CD4-positive, alpha-beta memory T cell (primary cell): ENCODE measurements at regions of chr14 and their contacts with region 1.

Region 1: DNA sequence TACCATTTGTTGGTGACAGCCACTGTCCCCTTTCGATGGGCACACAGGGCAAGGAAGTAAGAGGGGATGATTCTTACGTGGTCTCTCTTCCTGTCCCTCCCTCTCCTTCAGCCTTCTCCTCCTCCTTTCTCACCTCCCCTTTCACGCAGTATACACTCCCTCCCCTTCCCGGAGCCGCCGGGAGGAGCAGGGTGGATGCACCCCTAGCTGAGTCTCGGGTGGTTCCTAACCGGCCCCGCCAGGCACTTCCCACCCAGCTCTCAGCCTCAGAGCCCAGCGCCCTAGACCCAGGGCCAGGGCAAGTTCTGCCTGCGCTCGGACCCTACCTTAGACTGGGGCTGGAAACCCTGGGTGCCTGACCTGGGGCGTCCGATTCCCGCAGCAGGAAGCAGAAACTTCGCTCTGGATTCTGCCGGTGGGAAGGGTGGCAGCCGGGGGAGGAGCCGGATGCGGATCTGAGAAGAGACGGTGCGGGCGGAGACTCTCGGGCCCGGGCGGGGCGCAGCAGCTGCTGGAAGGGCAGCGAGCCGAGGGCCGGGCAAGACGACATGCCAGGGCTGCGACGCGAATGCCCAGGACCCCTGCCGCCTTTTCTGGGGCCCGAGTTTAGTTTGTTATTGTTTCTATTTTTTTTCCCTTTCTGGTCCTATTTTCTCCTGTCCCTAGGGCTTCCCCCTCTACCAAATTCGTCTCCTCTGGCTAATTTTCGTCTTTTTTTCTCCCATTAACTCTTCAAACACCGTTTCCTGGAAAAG is at the start of gene TEP1:
- DNase-seq: peak; percentile 56 to 75 (median 65)
- H3K4me3 ChIP-seq: peak within 1 kb of the TSS; percentile 73 to 79
- H3K4me3 Mint-ChIP-seq: peak within 1 kb of the TSS; percentile 92 to 100 (median 99)
- H3K27ac ChIP-seq: peak within 1 kb of the TSS; percentile 85
- H3K27ac Mint-ChIP-seq: peak within 1 kb of the TSS; percentile 91 to 99 (median 96)
- H3K4me1 ChIP-seq: peaks cover 38% of the 10 kb centered on the region
- H3K4me1 Mint-ChIP-seq: peaks cover 32 to 52% (median 41%) of the 10 kb centered on the region in 4 donors
- H3K27me3 ChIP-seq: no peaks in the 10 kb centered on the region
- H3K27me3 Mint-ChIP-seq: no peaks in the 10 kb centered on the region
- total RNA-seq, gene TEP1: 66.7 to 67.3 TPM

Region 2: GRCh38 chr14:20343092-20343861 is 69.9 kb before region 1 on chr14 and contains the start of gene PARP2:
- CTCF ChIA-PET with region 1: interaction called, 28 read pairs
- POLR2A ChIA-PET with region 1: interaction called, 34 read pairs
- intact Hi-C with region 1: loop called (anchors 1 kb)
- DNase-seq: peak; percentile 93 to 96 (median 93)
- H3K4me3 ChIP-seq: peak within 1 kb of the TSS; percentile 67 to 71
- H3K4me3 Mint-ChIP-seq: peak within 1 kb of the TSS; percentile 92 to 99 (median 98)
- H3K27ac ChIP-seq: peak within 1 kb of the TSS; percentile 94
- H3K27ac Mint-ChIP-seq: peak within 1 kb of the TSS; percentile 97 to 100 (median 98)
- H3K4me1 ChIP-seq: peaks cover 7% of the 10 kb centered on the region
- H3K4me1 Mint-ChIP-seq: peaks cover 5 to 27% (median 10%) of the 10 kb centered on the region in 4 donors
- H3K27me3 ChIP-seq: no peaks in the 10 kb centered on the region
- H3K27me3 Mint-ChIP-seq: no peaks in the 10 kb centered on the region
- total RNA-seq, gene PARP2: 20.3 to 25.0 TPM

Region 3: DNA sequence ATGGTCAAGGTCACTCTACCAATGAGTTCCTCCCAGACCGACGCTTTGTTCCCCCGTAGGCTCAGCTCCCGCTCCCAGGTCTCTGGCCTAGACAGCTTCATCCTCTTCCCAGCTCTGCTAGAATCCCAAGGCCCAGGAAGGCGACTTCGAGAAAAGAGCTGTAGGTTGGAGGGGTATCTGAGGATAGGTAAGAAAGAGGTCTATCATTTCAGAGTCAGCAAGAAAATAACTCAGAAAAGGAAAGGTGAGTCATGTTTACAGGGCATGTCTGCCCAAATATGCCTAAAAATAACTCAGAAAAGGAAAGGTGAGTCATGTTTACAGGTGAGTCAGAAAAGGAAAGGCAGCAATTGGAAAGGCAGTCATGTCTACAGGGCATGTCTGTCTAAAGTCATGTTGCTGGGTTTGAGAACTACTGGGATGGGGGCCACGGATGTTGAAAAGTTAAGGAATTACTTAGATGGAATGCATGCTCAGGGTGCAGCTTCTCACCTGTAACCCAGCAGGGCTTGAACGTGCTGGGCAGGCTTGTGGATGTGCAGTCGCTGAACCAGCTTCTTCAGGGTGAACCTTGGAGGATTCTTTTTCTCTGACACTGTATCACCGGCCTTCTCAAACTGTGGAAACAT is 12.1 kb before region 1 on chr14:
- CTCF ChIA-PET with region 1: interaction called, 48 read pairs
- POLR2A ChIA-PET with region 1: interaction called, 5 read pairs
- intact Hi-C with region 1: no loop called
- DNase-seq: no peak
- H3K4me3 ChIP-seq: no peak overlapping the region
- H3K4me3 Mint-ChIP-seq: peak overlapping the region in 1 of 8 donors; percentile 5
- H3K27ac ChIP-seq: no peak overlapping the region
- H3K27ac Mint-ChIP-seq: peak overlapping the region in 5 of 7 donors; percentile 1 to 81 (median 77)
- H3K4me1 ChIP-seq: no peaks in the 10 kb centered on the region
- H3K4me1 Mint-ChIP-seq: peaks cover 15 to 26% (median 22%) of the 10 kb centered on the region in 4 donors
- H3K27me3 ChIP-seq: no peaks in the 10 kb centered on the region
- H3K27me3 Mint-ChIP-seq: no peaks in the 10 kb centered on the region

Region 4: GRCh38 chr14:20440882-20441281 is 27.7 kb after region 1 on chr14:
- CTCF ChIA-PET with region 1: interaction called, 14 read pairs
- POLR2A ChIA-PET with region 1: no interaction called
- intact Hi-C with region 1: no loop called
- DNase-seq: peak in 3 of 5 donors; percentile 12 to 36 (median 22)
- H3K4me3 ChIP-seq: no peak overlapping the region
- H3K4me3 Mint-ChIP-seq: peak overlapping the region in 4 of 8 donors; percentile 14 to 68 (median 35)
- H3K27ac ChIP-seq: no peak overlapping the region
- H3K27ac Mint-ChIP-seq: peak overlapping the region; percentile 53 to 89 (median 68)
- H3K4me1 ChIP-seq: peaks cover 17% of the 10 kb centered on the region
- H3K4me1 Mint-ChIP-seq: peaks cover 9 to 27% (median 15%) of the 10 kb centered on the region in 4 donors
- H3K27me3 ChIP-seq: no peaks in the 10 kb centered on the region
- H3K27me3 Mint-ChIP-seq: no peaks in the 10 kb centered on the region

Region 5: GRCh38 chr14:20461274-20462001 is 48.2 kb after region 1 on chr14 and contains the start of gene PIP4P1:
- CTCF ChIA-PET with region 1: interaction called, 19 read pairs
- POLR2A ChIA-PET with region 1: interaction called, 16 read pairs
- intact Hi-C with region 1: no loop called
- DNase-seq: peak; percentile 98 to 100 (median 99)
- H3K4me3 ChIP-seq: peak within 1 kb of the TSS; percentile 64 to 76
- H3K4me3 Mint-ChIP-seq: peak within 1 kb of the TSS; percentile 89 to 96 (median 92)
- H3K27ac ChIP-seq: peak within 1 kb of the TSS; percentile 86
- H3K27ac Mint-ChIP-seq: peak within 1 kb of the TSS; percentile 92 to 99 (median 97)
- H3K4me1 ChIP-seq: peaks cover 39% of the 10 kb centered on the region
- H3K4me1 Mint-ChIP-seq: peaks cover 19 to 35% (median 23%) of the 10 kb centered on the region in 4 donors
- H3K27me3 ChIP-seq: no peaks in the 10 kb centered on the region
- H3K27me3 Mint-ChIP-seq: no peaks in the 10 kb centered on the region
- total RNA-seq, gene PIP4P1: 77.8 to 78.1 TPM

Region 6: GRCh38 chr14:20489093-20489994 is 76.1 kb after region 1 on chr14:
- CTCF ChIA-PET with region 1: interaction called, 11 read pairs
- POLR2A ChIA-PET with region 1: no interaction called
- intact Hi-C with region 1: no loop called
- DNase-seq: peak in 4 of 5 donors; percentile 15 to 38 (median 21)
- H3K4me3 ChIP-seq: peak overlapping the region in 1 of 2 donors; percentile 1
- H3K4me3 Mint-ChIP-seq: peak overlapping the region; percentile 60 to 87 (median 84)
- H3K27ac ChIP-seq: no peak overlapping the region
- H3K27ac Mint-ChIP-seq: peak overlapping the region; percentile 33 to 95 (median 86)
- H3K4me1 ChIP-seq: peaks cover 75% of the 10 kb centered on the region
- H3K4me1 Mint-ChIP-seq: peaks cover 59 to 88% (median 70%) of the 10 kb centered on the region in 4 donors
- H3K27me3 ChIP-seq: no peaks in the 10 kb centered on the region
- H3K27me3 Mint-ChIP-seq: no peaks in the 10 kb centered on the region

Region 7: GRCh38 chr14:20583923-20584322 is 170.7 kb after region 1 on chr14:
- CTCF ChIA-PET with region 1: no interaction called
- POLR2A ChIA-PET with region 1: no interaction called
- intact Hi-C with region 1: no loop called
- DNase-seq: no peak
- H3K4me3 ChIP-seq: no peak overlapping the region
- H3K4me3 Mint-ChIP-seq: no peak overlapping the region
- H3K27ac ChIP-seq: no peak overlapping the region
- H3K27ac Mint-ChIP-seq: no peak overlapping the region
- H3K4me1 ChIP-seq: no peaks in the 10 kb centered on the region
- H3K4me1 Mint-ChIP-seq: peaks cover 0 to 5% (median 0%) of the 10 kb centered on the region in 4 donors
- H3K27me3 ChIP-seq: no peaks in the 10 kb centered on the region
- H3K27me3 Mint-ChIP-seq: peaks cover 2 to 5% of the 10 kb centered on the region in 2 donors

Region 8: GRCh38 chr14:20969341-20969740 is 556.1 kb after region 1 on chr14:
- CTCF ChIA-PET with region 1: no interaction called
- POLR2A ChIA-PET with region 1: no interaction called
- intact Hi-C with region 1: no loop called
- DNase-seq: no peak
- H3K4me3 ChIP-seq: no peak overlapping the region
- H3K4me3 Mint-ChIP-seq: no peak overlapping the region
- H3K27ac ChIP-seq: no peak overlapping the region
- H3K27ac Mint-ChIP-seq: no peak overlapping the region
- H3K4me1 ChIP-seq: peaks cover 15% of the 10 kb centered on the region
- H3K4me1 Mint-ChIP-seq: peaks cover 3 to 14% (median 10%) of the 10 kb centered on the region in 4 donors
- H3K27me3 ChIP-seq: no peaks in the 10 kb centered on the region
- H3K27me3 Mint-ChIP-seq: peaks cover 16 to 18% of the 10 kb centered on the region in 2 donors

Region 9: GRCh38 chr14:21145437-21145836 is 732.2 kb after region 1 on chr14:
- CTCF ChIA-PET with region 1: no interaction called
- POLR2A ChIA-PET with region 1: no interaction called
- intact Hi-C with region 1: no loop called
- DNase-seq: no peak
- H3K4me3 ChIP-seq: no peak overlapping the region
- H3K4me3 Mint-ChIP-seq: no peak overlapping the region
- H3K27ac ChIP-seq: no peak overlapping the region
- H3K27ac Mint-ChIP-seq: no peak overlapping the region
- H3K4me1 ChIP-seq: no peaks in the 10 kb centered on the region
- H3K4me1 Mint-ChIP-seq: no peaks in the 10 kb centered on the region
- H3K27me3 ChIP-seq: no peaks in the 10 kb centered on the region
- H3K27me3 Mint-ChIP-seq: peaks cover 6 to 10% of the 10 kb centered on the region in 2 donors